ENCODE measurements at regions of chr10 and their contacts with region 1.

Region 1: DNA sequence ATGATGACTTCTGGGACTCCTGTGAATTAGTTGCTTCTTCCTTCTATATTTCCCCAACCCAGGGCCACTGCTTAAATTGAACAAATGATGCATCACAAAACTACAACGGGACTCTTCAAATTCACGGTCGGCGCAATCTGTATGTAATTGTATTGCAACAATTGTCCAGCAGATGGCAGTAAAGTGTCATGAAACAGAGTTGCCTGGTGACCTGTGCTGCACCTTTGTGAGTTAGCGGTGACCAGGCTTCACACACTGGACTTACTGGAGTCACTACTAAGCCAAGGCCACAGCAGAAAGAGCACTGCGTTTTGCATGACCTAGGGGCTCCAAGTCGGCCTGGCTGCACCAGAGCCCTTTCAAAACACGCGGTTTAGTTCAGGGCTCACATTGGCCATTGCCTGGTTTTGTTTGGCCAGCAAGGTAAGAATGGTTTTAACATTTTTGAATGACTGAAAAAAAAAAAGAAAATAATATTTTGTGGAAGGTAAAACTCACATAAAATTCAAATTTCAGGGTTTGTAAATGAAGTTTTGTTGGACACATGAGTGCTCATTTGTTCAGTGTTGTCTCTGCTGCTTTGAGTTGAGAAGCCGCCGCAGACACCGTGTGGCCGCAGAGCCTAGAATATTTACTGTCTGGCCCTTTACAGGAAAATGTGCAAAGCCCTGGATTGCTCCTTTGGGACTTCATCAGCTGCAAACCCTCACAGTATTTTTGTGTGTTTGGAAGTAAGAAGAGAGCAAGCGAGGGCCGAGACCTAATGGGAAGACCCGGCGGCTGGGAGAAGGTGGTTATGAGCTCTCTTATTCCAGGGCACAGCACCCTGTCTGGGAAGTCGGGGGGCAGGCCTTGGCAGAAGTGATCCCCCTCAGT is 23.2 kb upstream of the ZNF32 start:
- DNase-seq: peak; percentile 69
- H3K4me3 ChIP-seq: no peak overlapping the region
- H3K27ac ChIP-seq: no peak overlapping the region
- H3K4me1 ChIP-seq: no peaks in the 10 kb centered on the region
- H3K27me3 ChIP-seq: peaks cover 9 to 12% of the 10 kb centered on the region in 2 experiments
- CTCF ChIP-seq: peak; percentile 47 to 64
- POLR2A ChIP-seq: no peak

Region 2: GRCh38 chr10:43683451-43684291 is 11.8 kb after region 1 on chr10:
- CTCF ChIA-PET with region 1: interaction called, 19 read pairs
- POLR2A ChIA-PET with region 1: no interaction called
- dilution Hi-C with region 1: no loop called
- intact Hi-C with region 1: no loop called
- DNase-seq: no peak
- H3K4me3 ChIP-seq: no peak overlapping the region
- H3K27ac ChIP-seq: no peak overlapping the region
- H3K4me1 ChIP-seq: no peaks in the 10 kb centered on the region
- H3K27me3 ChIP-seq: peaks cover 0 to 6% of the 10 kb centered on the region in 2 experiments
- CTCF ChIP-seq: peak; percentile 46 to 65
- POLR2A ChIP-seq: no peak

Region 3: GRCh38 chr10:43785252-43785651 is 113.4 kb after region 1 on chr10:
- CTCF ChIA-PET with region 1: no interaction called
- POLR2A ChIA-PET with region 1: no interaction called
- dilution Hi-C with region 1: no loop called
- intact Hi-C with region 1: loop called (anchors 5 kb)
- DNase-seq: peak; percentile 21
- H3K4me3 ChIP-seq: no peak overlapping the region
- H3K27ac ChIP-seq: no peak overlapping the region
- H3K4me1 ChIP-seq: no peaks in the 10 kb centered on the region
- H3K27me3 ChIP-seq: peaks cover 0 to 3% of the 10 kb centered on the region in 2 experiments
- CTCF ChIP-seq: no peak
- POLR2A ChIP-seq: no peak

Region 4: GRCh38 chr10:44310762-44311562 is 639.1 kb after region 1 on chr10:
- CTCF ChIA-PET with region 1: interaction called, 3 read pairs
- POLR2A ChIA-PET with region 1: no interaction called
- dilution Hi-C with region 1: no loop called
- intact Hi-C with region 1: loop called (anchors 1 kb)
- DNase-seq: peak; percentile 53
- H3K4me3 ChIP-seq: no peak overlapping the region
- H3K27ac ChIP-seq: no peak overlapping the region
- H3K4me1 ChIP-seq: no peaks in the 10 kb centered on the region
- H3K27me3 ChIP-seq: no peaks in the 10 kb centered on the region
- CTCF ChIP-seq: peak; percentile 85 to 87
- POLR2A ChIP-seq: no peak

Region 5: DNA sequence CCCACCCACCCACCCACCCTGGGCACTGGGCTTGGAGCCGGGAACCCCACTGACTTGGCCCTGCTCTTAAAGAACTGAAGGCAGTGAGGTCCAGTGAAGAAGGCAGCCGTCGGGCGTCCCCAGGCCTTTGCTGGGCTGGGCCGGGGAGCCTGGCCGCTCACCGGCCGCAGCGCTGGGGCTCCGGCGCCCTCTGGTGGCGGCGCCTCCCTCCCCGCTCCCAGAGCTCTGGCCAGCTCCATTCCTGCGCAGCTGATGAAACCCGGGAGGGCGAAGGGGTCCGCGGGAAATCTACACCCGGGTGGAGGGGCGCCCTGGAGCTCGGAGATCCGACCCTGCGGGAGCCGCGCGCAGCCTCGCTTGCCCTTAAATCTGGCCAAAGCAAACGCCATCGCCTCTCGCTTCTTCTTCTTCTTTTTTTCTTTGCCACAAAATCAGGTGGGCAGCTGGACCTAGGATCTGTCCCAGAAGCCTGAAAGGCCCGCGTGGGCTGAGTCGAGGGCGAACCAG is 714.7 kb after region 1 on chr10:
- CTCF ChIA-PET with region 1: interaction called, 62 read pairs
- POLR2A ChIA-PET with region 1: no interaction called
- dilution Hi-C with region 1: no loop called
- intact Hi-C with region 1: loop called (anchors 1 kb)
- DNase-seq: peak; percentile 37
- H3K4me3 ChIP-seq: no peak overlapping the region
- H3K27ac ChIP-seq: no peak overlapping the region
- H3K4me1 ChIP-seq: no peaks in the 10 kb centered on the region
- H3K27me3 ChIP-seq: peaks cover 15 to 25% of the 10 kb centered on the region in 2 experiments
- CTCF ChIP-seq: peak; percentile 81 to 94
- POLR2A ChIP-seq: no peak